Colonic mucosa (tissue), 4 donors: ENCODE measurements at regions of chr1 and their contacts with region 1.

Region 1: GRCh38 chr1:25343872-25344271 is 5.7 kb downstream of the TMEM50A start:
- DNase-seq: no peak
- H3K4me3 ChIP-seq: no peak overlapping the region
- H3K27ac ChIP-seq: no peak overlapping the region
- H3K4me1 ChIP-seq: peaks cover 13% of the 10 kb centered on the region
- H3K27me3 ChIP-seq: no peaks in the 10 kb centered on the region
- CTCF ChIP-seq: no peak

Region 2: DNA sequence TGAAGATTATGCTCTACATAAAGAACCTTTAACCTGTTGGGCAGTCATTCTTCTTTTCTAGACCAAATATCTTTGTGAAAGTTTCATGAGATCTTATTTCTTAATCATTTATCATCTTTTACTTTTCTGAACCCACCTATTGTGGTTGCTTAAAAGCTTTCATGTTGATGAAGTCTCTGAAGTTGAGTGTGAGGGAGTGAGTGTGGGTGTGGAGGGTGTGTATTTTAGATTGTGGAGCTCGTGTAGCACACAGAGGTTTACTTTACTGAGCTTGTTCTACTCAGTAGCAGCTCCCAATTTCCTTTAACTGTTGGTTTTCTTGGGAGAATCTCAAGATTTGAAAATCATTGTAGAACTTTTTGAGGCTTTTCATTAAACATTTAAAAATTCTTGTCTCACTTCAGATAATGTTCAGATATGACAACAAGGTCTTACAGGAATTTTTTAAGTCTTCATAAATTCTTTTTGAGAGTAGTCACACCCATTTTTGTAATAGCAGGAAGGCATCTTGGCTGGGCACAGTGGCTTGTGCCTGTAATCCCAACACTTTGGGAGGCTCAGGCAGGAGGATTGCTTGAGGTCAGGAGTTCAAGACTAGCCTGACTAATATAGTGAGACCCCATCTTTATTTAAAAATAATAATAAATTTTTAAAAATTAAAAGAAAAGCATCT is 683.7 kb before region 1 on chr1:
- intact Hi-C with region 1: loop called (anchors 10 kb)
- DNase-seq: no peak
- H3K4me3 ChIP-seq: no peak overlapping the region
- H3K27ac ChIP-seq: no peak overlapping the region
- H3K4me1 ChIP-seq: no peaks in the 10 kb centered on the region
- H3K27me3 ChIP-seq: no peaks in the 10 kb centered on the region
- CTCF ChIP-seq: no peak

Region 3: DNA sequence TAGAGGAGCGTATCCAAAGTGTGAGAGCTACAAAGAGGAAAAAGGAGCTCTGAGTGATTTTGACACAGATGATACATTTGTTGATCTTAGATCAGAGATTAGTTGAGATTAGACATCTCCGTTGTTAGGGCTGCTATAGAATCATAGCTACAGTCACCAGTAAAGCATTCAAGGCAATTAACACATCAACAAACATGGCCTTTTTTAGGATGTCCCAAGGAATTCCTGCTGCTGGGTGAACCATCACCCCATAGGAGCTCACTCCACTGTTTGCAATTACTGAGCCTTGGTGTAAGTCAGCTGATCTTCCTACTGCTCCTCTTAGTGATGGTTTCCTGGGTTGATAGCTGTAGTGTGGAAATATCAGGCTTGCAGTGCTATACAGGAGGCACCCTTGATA is 90.0 kb before region 1 on chr1:
- intact Hi-C with region 1: loop called (anchors 10 kb)
- DNase-seq: no peak
- H3K4me3 ChIP-seq: no peak overlapping the region
- H3K27ac ChIP-seq: no peak overlapping the region
- H3K4me1 ChIP-seq: no peaks in the 10 kb centered on the region
- H3K27me3 ChIP-seq: no peaks in the 10 kb centered on the region
- CTCF ChIP-seq: no peak